GM10248 (cell line): ENCODE measurements at regions of chr15 and their contacts with region 1.

Region 1: DNA sequence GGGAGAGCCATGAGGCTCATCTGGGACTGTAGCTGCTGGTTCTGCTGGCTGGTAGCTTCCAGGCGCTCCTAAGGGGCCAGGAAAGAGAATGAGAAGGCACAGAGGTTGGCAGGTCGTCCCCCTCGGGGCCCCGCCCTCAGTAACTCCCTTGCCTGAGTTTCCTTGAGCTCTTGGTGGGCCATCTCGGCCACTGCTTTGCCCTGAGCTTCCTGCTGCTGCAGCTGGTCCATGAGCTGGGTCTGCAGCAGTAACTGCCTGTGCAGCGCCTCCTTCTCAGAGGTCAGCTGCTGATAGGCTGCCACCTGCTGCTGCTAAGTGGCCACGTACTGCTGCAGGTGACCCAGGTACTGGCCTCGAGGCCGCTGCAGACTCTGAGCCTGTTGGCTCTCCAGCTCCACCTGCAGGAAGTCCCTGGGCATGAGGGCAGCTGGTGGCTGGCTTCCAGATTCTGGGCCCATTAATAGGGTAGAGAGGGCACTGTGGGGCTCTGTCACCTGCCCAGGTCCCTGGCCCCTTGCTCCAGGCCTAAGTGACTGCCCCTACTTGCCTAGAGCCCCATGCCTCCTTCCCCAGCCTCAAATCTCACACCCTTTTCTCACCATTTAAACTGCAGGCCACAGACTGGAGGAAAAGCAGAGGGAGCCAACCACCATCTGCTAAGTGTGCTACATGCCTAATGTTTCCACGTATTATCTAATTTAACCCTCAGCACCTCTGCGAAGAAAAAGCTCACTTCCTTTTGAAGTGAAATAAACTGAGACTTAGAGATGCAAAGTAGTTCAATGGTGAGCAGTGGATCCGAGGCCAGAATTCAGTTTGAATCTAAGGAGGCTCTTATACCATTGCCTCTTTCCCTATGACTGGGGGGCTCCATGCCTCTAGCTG is 10.8 kb upstream of the VPS33B start:
- DNase-seq: peak; percentile 59
- CTCF ChIP-seq: peak; percentile 86

Region 2: DNA sequence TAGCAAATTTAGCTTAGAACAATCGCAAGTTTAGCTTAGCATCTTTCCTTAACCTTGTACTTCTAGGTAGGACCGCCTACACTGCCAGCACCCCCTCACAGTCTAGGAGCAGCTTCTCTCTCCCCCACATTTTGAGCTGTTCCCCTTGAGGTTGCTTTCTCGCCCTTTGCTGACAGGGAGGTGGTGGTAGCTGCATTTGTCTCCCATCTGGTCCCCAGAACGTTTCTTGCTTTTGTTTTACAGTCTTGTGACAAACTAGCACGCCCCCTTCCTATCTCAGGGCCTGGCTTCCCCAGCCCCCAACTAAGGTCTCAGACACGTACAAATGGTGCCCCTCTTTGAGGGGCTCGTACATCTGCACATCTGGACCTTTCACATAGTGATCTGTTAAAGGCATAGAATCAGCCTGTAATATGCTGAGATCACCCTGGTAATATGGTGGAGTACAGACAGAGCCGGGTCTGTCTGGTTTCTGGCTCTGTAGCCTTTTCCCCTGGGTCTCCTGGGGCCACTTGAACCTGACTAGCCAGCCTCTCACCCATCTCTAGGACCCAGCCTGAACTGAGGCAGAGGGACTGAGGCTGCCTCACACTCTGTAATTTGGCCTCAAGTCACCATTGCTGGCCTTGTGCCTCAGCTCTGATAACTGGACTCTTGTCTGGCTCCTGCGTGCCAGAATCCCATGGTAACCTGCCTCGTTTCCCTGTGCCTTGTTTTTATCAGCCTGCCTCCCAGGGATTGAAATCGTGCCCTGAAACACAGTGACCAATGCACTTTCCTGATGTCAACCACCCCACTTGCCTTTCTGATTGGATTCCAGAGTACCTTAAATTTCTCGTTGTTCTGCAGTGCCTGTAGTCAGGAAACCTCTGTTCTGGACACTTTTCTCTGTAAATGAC is 475.7 kb before region 1 on chr15:
- CTCF ChIA-PET with region 1: no interaction called
- POLR2A ChIA-PET with region 1: no interaction called
- DNase-seq: peak; percentile 44
- CTCF ChIP-seq: no peak

Region 3: GRCh38 chr15:90862964-90863778 is 170.0 kb before region 1 on chr15:
- CTCF ChIA-PET with region 1: no interaction called
- POLR2A ChIA-PET with region 1: no interaction called
- DNase-seq: no peak
- CTCF ChIP-seq: no peak

Region 4: GRCh38 chr15:90946538-90946937 is 86.6 kb before region 1 on chr15:
- CTCF ChIA-PET with region 1: interaction called, 12 read pairs
- POLR2A ChIA-PET with region 1: no interaction called
- DNase-seq: no peak
- CTCF ChIP-seq: no peak

Region 5: GRCh38 chr15:90961902-90962420 is 71.2 kb before region 1 on chr15:
- CTCF ChIA-PET with region 1: interaction called, 134 read pairs
- POLR2A ChIA-PET with region 1: no interaction called
- DNase-seq: no peak
- CTCF ChIP-seq: no peak

Region 6: DNA sequence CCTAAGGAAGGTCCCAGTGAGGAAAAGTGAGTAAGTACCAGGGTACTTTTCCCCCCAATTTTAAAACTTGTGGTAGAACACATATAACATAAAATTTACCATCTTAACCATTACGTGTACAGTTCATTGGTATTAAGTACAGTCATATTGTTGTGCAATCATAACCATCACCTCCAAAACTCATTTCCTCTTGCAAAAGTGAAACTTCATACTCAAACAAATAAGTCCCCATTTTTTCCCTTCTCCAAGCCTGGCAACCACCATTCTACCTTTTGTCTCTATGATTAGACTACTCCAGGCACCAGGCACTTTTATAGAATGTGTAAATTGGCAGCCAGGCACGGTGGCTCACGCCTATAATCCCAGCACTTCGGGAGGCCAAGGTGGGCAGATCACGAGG is 51.0 kb before region 1 on chr15:
- CTCF ChIA-PET with region 1: interaction called, 38 read pairs
- POLR2A ChIA-PET with region 1: no interaction called
- DNase-seq: no peak
- CTCF ChIP-seq: no peak

Region 7: DNA sequence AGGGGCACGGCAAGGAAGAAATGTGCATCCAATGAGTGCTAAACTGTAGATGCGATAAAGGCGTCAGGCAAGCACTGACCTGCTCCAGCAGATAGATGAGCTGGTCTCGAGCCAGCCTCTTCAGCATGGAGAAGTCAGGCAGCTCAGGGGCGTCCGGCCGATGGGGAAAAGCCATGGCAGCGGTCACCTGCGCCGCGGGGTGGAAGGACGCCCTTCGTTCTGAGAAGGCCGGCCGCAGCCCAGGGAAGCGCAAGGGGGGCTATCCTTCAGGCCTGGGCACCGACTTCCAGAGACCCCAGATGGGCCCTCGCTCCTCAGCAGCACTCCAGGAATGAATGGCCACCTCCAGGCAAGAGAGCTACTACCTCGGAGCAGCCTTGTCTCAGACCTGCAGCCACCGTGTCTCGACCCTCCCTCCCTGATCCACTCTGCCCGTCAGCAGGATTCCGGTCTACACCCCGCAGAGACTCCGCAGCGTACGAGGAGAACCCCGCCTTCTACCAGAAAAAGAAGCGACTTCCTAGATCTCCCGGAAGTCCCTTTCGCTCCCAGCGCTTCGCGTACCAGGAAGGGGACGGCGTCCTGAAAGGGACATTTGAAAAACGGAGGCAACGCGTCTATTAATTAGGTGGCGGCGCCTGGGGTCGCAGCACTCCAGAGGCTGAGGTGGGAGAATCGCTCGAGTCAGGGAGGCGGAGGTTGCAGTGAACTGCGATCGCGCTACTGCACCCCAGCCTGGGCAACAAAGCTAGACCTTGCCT is 10.9 kb before region 1 on chr15 and contains the start of gene VPS33B:
- CTCF ChIA-PET with region 1: interaction called, 37 read pairs
- POLR2A ChIA-PET with region 1: no interaction called
- DNase-seq: peak; percentile 79
- CTCF ChIP-seq: no peak

Region 8: DNA sequence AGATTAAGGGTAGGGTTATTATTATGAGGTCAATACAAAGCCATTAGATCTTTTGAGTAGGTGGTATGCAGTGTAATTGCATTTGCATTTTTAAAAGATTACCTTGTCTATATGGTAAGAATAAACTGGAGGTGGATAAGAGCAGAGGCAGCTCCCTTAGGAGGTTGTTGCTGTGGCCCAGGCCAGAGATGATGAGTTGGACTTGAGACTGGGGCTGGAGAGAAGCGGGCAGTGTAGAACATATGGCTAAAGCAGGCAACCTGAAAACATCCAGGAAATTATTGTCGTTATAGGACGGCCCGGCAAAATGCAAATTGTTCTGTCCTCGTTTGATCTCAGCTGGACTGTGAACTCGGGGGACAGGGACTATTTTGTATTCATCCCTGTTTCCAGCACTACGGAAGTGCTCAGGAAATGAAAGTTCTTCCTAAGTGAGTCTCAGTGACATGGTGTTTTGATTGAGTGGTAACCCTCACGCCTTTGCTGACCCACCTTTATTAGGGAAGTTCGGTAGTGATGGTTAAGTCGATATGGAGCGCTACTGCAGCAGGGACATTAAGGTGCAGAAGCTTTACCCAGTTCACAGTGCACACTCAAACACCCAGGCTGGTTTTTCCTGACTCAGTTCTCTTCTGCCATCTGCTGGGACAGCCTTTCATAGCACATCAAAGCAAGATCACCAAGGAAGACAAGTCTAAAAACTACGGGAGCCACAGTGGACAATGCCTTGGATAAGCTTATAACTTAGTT is 16.4 kb after region 1 on chr15:
- CTCF ChIA-PET with region 1: interaction called, 17 read pairs
- POLR2A ChIA-PET with region 1: no interaction called
- DNase-seq: peak; percentile 54
- CTCF ChIP-seq: peak; percentile 76

Region 9: GRCh38 chr15:91150502-91151160 is 117.5 kb after region 1 on chr15:
- CTCF ChIA-PET with region 1: no interaction called
- POLR2A ChIA-PET with region 1: no interaction called
- DNase-seq: no peak
- CTCF ChIP-seq: no peak

Region 10: GRCh38 chr15:91385311-91385710 is 352.1 kb after region 1 on chr15:
- CTCF ChIA-PET with region 1: no interaction called
- POLR2A ChIA-PET with region 1: no interaction called
- DNase-seq: no peak
- CTCF ChIP-seq: no peak